ENCODE measurements at regions of chr1 and their contacts with region 1.

Region 1: GRCh38 chr1:160083968-160084770 is 2.8 kb downstream of the KCNJ9 start:
- DNase-seq: peak; percentile 88 to 93
- H3K4me3 ChIP-seq: peak overlapping the region; percentile 39 to 49 (median 43)
- H3K27ac ChIP-seq: no peak overlapping the region
- H3K4me1 ChIP-seq: peaks cover 9 to 23% (median 13%) of the 10 kb centered on the region in 4 donors
- H3K27me3 ChIP-seq: peaks cover 0 to 57% (median 42%) of the 10 kb centered on the region in 3 donors
- CTCF ChIP-seq: peak in 5 of 7 experiments; percentile 51 to 70 (median 70)
- EP300 ChIP-seq: no peak
- POLR2A ChIP-seq: no peak

Region 2: GRCh38 chr1:160046494-160047110 is 37.6 kb before region 1 on chr1:
- intact Hi-C with region 1: loop called (anchors 5 kb)
- DNase-seq: peak; percentile 39 to 73
- H3K4me3 ChIP-seq: peak overlapping the region in 2 of 4 donors; percentile 7 to 18
- H3K27ac ChIP-seq: peak overlapping the region in 1 of 5 donors; percentile 18
- H3K4me1 ChIP-seq: peaks cover 6 to 15% (median 11%) of the 10 kb centered on the region in 4 donors
- H3K27me3 ChIP-seq: peaks cover 0 to 5% (median 0%) of the 10 kb centered on the region in 3 donors
- CTCF ChIP-seq: peak in 5 of 7 experiments; percentile 29 to 64 (median 55)
- EP300 ChIP-seq: no peak
- POLR2A ChIP-seq: no peak